ENCODE measurements at regions of chr1 and their contacts with region 1.

Region 1: DNA sequence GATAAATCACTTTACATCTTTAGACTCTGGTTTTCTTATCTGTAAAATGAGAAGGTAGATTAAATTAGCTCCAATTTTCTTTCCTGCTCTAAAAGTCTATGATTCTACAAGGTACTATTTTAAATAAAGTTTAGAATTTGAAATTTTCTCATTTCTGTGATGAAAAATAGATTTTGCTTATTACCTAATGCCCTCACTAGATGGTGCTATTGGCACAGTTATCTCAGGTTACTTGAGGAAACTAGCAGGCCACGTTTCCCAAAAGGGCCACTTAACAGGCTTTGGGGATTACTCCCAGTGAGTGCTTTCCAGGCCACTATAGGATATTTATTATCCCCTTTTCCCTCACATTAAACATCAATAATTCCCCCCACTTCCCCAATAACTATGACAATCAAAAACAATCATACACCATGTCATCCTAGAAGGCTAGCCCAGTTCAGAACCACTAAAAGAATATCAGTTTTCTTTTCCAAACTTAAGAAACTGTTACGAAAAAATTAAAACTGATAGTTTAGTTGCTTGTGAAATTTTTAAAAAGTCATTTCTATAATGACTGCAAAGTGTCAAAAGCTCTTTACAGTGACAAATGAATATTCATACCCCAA is 30.6 kb downstream of the OMA1 start:
- DNase-seq: peak; percentile 35
- H3K4me3 Mint-ChIP-seq: no peak overlapping the region
- H3K27ac Mint-ChIP-seq: peak overlapping the region; percentile 38
- H3K4me1 Mint-ChIP-seq: peaks cover 7% of the 10 kb centered on the region
- H3K27me3 Mint-ChIP-seq: no peaks in the 10 kb centered on the region

Region 2: GRCh38 chr1:58500043-58500442 is 15.9 kb before region 1 on chr1:
- CTCF ChIA-PET with region 1: interaction called, 10 read pairs
- intact Hi-C with region 1: no loop called
- DNase-seq: no peak
- H3K4me3 Mint-ChIP-seq: no peak overlapping the region
- H3K27ac Mint-ChIP-seq: no peak overlapping the region
- H3K4me1 Mint-ChIP-seq: peaks cover 30% of the 10 kb centered on the region
- H3K27me3 Mint-ChIP-seq: no peaks in the 10 kb centered on the region

Region 3: GRCh38 chr1:58528518-58528917 is 12.6 kb after region 1 on chr1:
- CTCF ChIA-PET with region 1: interaction called, 30 read pairs
- intact Hi-C with region 1: no loop called
- DNase-seq: no peak
- H3K4me3 Mint-ChIP-seq: no peak overlapping the region
- H3K27ac Mint-ChIP-seq: no peak overlapping the region
- H3K4me1 Mint-ChIP-seq: peaks cover 20% of the 10 kb centered on the region
- H3K27me3 Mint-ChIP-seq: no peaks in the 10 kb centered on the region

Region 4: GRCh38 chr1:59759156-59759925 is 1243.4 kb after region 1 on chr1:
- CTCF ChIA-PET with region 1: no interaction called
- intact Hi-C with region 1: loop called (anchors 1 kb)
- DNase-seq: peak; percentile 83
- H3K4me3 Mint-ChIP-seq: peak overlapping the region; percentile 47
- H3K27ac Mint-ChIP-seq: peak overlapping the region; percentile 53
- H3K4me1 Mint-ChIP-seq: peaks cover 4% of the 10 kb centered on the region
- H3K27me3 Mint-ChIP-seq: no peaks in the 10 kb centered on the region

Measured in activated naive CD4-positive, alpha-beta T cell treated with anti-CD3 and anti-CD28 coated beads for 36 hours (primary cell).